PC-9 (cell line): ENCODE measurements at regions of chr19 and their contacts with region 1.

Region 1: GRCh38 chr19:41133260-41133659 is 19.0 kb downstream of the CYP2F1 start:
- DNase-seq: peak in 1 of 2 experiments; percentile 33
- H3K4me3 ChIP-seq: no peak overlapping the region
- H3K27ac ChIP-seq: no peak overlapping the region
- H3K4me1 ChIP-seq: peaks cover 5% of the 10 kb centered on the region; the same call in 1 of the 2 replicates
- H3K27me3 ChIP-seq: peaks cover 3% of the 10 kb centered on the region
- CTCF ChIP-seq: no peak

Region 2: DNA sequence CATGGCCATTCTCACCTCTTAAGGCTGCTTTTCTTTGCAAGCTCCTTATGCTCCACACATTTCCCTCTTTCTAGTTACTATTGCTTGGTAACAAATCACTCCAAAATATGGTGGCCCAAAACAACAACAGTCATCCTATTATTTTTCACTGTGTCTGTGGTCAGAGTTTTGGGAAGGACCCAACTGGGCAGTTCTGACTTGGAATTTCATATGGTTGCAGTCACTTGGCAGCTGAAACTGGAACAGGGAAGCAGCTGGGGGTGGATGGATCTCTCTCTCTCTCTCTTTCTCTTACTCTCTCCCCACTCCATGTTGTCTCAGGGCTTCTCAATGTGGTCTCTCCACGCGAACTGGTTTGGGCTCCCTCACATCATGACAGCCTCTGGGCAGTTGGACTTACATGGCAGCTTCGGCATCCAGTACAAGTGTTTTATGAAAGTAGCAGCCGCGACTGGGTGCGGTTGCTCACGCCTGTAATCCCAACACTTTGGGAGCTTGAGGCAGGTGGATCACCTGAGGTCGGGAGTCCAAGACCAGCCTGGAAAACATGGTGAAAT is 482.4 kb before region 1 on chr19:
- CTCF ChIA-PET with region 1: interaction called, 10 read pairs
- POLR2A ChIA-PET with region 1: no interaction called
- intact Hi-C with region 1: no loop called
- DNase-seq: no peak
- H3K4me3 ChIP-seq: no peak overlapping the region
- H3K27ac ChIP-seq: no peak overlapping the region
- H3K4me1 ChIP-seq: peaks cover 10% of the 10 kb centered on the region
- H3K27me3 ChIP-seq: no peaks in the 10 kb centered on the region
- CTCF ChIP-seq: no peak

Region 3: DNA sequence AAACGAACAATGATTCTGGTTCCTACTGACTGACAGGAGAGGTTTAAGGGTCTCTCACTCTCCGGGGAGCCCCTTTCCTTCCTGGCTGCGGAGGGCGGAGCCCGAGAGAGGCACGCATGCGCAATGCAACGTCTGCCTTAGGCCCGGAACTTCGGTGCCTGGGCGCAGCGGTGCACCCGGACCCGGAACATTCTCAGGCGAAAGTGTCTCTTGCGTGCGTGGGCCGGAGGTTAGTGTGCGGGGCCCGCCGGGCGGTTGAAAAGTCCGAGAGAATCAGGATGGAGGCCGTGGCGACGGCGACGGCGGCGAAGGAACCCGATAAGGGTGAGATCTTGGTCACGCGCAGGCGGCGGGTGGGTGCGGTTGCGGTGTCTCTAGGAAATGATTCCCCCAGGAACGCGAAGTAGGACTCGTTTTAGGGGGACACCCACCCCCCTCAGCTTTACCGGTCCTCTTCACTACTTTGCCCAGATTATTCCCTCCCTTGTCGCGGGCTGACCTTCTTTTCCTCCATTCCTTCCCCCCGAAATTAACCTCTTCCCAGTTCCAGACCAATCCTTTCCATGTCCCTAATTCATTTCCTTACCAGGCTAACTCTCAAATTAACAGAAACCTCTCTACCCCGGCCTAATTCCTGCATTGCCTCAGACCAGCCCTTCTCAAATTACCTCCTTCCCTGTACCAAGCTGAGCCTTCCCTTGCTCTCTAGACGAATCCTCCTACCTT is 176.9 kb after region 1 on chr19 and contains the start of gene CCDC97:
- CTCF ChIA-PET with region 1: no interaction called
- POLR2A ChIA-PET with region 1: no interaction called
- intact Hi-C with region 1: loop called (anchors 5 kb)
- DNase-seq: peak; percentile 67 to 84
- H3K4me3 ChIP-seq: peak within 1 kb of the TSS; percentile 88
- H3K27ac ChIP-seq: peak within 1 kb of the TSS; percentile 87
- H3K4me1 ChIP-seq: peaks cover 16% of the 10 kb centered on the region
- H3K27me3 ChIP-seq: no peaks in the 10 kb centered on the region
- CTCF ChIP-seq: no peak
- total RNA-seq, gene CCDC97: 24.1 and 26.4 TPM in 2 replicates